Dorsolateral prefrontal cortex (tissue), 120 donors: ENCODE measurements at regions of chr1 and their contacts with region 1.

Region 1: DNA sequence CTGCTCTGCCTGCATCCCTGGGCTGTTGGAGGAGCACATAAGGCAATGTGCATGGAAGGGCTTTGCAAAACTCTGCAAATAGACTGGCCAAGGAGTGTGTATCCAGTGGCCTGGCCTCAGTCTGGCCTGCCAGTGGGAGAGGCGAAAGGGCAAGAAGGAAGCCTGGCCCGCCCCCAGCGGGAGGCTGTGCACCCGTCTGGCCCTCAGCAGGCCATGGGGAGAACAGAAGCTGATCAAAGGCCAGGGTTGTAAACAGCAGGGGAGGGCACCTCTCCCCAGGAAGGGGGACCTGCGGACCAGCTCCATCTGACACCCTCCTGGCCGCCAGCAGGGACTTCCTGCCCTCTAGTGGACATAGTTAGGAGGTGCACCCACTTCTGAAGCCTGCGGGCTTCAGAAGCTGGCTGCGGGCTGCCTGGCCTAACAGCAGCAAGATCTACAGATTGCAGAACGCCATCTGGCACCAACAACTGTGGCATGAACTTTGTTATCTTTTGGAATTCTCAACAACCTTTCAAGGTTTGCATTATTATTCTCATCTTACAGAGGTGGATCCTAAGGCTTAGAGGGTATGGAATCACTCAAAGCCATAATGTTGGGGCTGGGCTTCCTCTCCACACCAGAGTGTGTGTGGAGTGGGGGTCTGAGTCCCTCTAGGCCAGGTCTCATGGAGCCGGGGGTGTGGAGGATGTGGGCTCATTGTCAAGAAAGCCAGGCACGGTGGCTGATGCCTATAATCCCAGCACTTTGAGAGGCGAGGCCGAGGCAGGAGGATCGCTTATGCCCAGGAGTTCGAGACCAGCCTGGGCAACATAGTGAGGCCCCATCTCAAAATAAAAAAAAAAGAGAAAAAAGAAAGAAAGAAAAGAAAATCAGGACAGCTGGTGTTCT is 18.9 kb upstream of the CDK18 start:
- DNase-seq: peak in 9 of 10 donors; percentile 59 to 82 (median 69)
- H3K4me3 ChIP-seq: no peak overlapping the region
- H3K27ac ChIP-seq: peak overlapping the region in 1 of 59 donors; percentile 33
- H3K27me3 ChIP-seq: peaks cover 0 to 9% (median 0%) of the 10 kb centered on the region in 45 donors
- CTCF ChIP-seq: peak in 55 of 56 donors; percentile 79 to 99 (median 97)

Region 2: GRCh38 chr1:205273551-205273982 is 212.0 kb before region 1 on chr1:
- intact Hi-C with region 1: loop called in 1 of 2 experiments (anchors 5 kb)
- DNase-seq: peak; percentile 87 to 94 (median 90)
- H3K4me3 ChIP-seq: no peak overlapping the region
- H3K27ac ChIP-seq: peak overlapping the region; percentile 10 to 100 (median 92)
- H3K27me3 ChIP-seq: no peaks in the 10 kb centered on the region
- CTCF ChIP-seq: peak; percentile 94 to 100 (median 99)

Region 3: DNA sequence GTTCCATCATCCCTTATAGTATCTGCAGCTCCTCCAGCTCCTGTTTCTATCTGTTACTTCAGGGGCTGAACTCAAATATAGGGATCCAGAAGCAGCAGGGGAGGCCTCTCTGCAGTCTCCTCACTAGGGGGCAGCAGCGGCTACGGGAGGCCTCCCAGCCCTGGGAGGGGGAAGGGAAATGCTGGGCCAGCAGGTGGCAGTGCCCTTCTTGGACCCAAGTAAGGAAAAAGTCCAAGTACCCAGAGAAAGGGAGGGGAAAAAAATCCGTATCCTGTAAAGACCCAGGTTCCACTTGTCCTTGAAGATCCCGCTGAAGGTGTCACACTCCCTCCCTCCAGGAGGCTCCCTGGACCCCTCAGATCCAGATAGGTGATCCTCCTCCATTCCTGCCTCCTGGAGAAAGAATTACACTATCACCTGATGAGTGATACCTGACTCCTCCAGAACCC is 149.9 kb before region 1 on chr1:
- intact Hi-C with region 1: loop called (anchors 2 to 5 kb)
- DNase-seq: peak; percentile 69 to 86 (median 78)
- H3K4me3 ChIP-seq: no peak overlapping the region
- H3K27ac ChIP-seq: no peak overlapping the region
- H3K27me3 ChIP-seq: no peaks in the 10 kb centered on the region
- CTCF ChIP-seq: peak; percentile 62 to 99 (median 96)

Region 4: DNA sequence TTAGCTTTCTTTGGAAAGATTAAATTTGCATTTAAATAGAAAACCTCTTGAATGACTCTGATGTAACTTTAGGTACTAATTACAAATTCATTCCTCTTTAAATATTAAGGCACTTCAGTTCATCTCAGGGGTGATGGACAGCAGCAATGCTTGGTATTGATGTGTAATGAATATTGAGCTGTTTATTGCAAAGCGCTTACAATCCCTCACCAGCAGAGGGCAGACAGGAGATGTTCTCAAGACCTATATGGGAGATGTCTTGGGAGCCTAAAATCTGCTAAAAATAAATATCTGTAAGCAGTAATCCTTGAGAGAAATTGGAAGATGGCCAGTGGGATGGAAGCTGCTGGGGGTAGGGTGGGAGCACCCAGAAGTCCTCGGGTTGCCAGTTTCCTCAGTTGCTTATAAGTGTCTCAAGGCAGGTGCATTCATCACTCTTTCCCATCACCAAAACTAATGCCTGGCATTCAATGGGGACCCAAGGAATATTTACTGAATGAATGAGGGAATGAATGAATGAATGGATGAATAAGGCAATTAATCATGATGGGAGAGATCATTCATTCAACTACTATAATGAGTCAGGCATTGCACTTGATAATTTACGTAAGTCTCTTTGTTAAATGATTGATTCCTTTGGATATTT is 131.2 kb before region 1 on chr1:
- intact Hi-C with region 1: loop called (anchors 1 to 5 kb)
- DNase-seq: peak in 5 of 10 donors; percentile 52 to 83 (median 66)
- H3K4me3 ChIP-seq: no peak overlapping the region
- H3K27ac ChIP-seq: peak overlapping the region in 3 of 59 donors; percentile 22 to 40 (median 36)
- H3K27me3 ChIP-seq: no peaks in the 10 kb centered on the region
- CTCF ChIP-seq: peak; percentile 72 to 95 (median 86)

Region 5: GRCh38 chr1:205396967-205397616 is 88.5 kb before region 1 on chr1:
- intact Hi-C with region 1: loop called (anchors 2 to 10 kb)
- DNase-seq: peak in 2 of 10 donors; percentile 40 to 71
- H3K4me3 ChIP-seq: no peak overlapping the region
- H3K27ac ChIP-seq: no peak overlapping the region
- H3K27me3 ChIP-seq: no peaks in the 10 kb centered on the region
- CTCF ChIP-seq: peak; percentile 51 to 81 (median 73)

Region 6: GRCh38 chr1:205430696-205431305 is 54.8 kb before region 1 on chr1:
- intact Hi-C with region 1: loop called in 1 of 2 experiments (anchors 10 kb)
- DNase-seq: peak in 8 of 10 donors; percentile 58 to 79 (median 70)
- H3K4me3 ChIP-seq: peak overlapping the region; percentile 36 to 73 (median 59)
- H3K27ac ChIP-seq: peak overlapping the region in 33 of 59 donors; percentile 4 to 81 (median 46)
- H3K27me3 ChIP-seq: no peaks in the 10 kb centered on the region
- CTCF ChIP-seq: peak; percentile 43 to 94 (median 84)

Region 7: GRCh38 chr1:205449750-205450443 is 35.7 kb before region 1 on chr1:
- intact Hi-C with region 1: no loop called
- DNase-seq: no peak
- H3K4me3 ChIP-seq: no peak overlapping the region
- H3K27ac ChIP-seq: peak overlapping the region in 1 of 59 donors; percentile 71
- H3K27me3 ChIP-seq: peaks cover 0 to 42% (median 21%) of the 10 kb centered on the region in 45 donors
- CTCF ChIP-seq: no peak

Region 8: DNA sequence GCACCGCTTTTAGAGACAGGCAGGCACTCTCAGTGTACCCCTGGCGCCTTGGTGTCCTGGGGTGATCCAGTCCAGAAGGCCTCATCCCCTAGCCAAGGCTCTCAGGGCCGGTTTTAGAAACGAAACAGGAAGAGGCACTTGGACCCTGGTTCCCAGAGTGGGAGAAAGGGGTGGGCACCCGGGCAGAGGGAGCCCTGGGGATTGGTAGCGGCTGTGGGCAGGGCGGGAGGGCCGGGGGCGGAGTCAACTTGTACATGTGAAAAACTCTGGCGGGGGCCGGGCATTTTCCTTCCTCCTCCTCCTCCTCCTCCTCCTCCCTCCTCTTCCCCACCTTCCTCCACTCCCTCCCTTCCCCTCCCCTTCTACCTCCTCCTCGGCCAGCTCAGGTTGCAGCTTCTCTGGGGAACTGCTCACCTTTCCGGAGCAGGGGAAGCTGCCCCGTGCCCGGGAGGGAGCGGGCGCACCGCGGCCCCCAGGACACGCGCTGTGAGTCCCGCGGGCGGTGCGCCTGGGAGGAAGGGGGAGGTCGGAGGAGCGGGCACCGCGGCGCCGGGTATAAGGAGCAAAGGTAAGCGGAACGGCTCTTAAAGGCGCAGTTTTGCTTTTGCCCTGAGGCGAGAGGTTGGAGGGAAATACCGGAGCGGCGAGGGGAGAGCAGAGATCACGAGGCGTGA is 18.9 kb after region 1 on chr1 and contains the start of gene CDK18:
- intact Hi-C with region 1: no loop called
- DNase-seq: peak; percentile 63 to 95 (median 92)
- H3K4me3 ChIP-seq: peak within 1 kb of the TSS; percentile 61 to 92 (median 83)
- H3K27ac ChIP-seq: peak within 1 kb of the TSS; percentile 71 to 100 (median 95)
- H3K27me3 ChIP-seq: no peaks in the 10 kb centered on the region
- CTCF ChIP-seq: no peak
- total RNA-seq, gene CDK18: 55.9 to 606 (median 176) TPM

Region 9: GRCh38 chr1:205523891-205524793 is 38.6 kb after region 1 on chr1:
- intact Hi-C with region 1: loop called in 1 of 2 experiments (anchors 1 kb)
- DNase-seq: peak; percentile 83 to 94 (median 90)
- H3K4me3 ChIP-seq: no peak overlapping the region
- H3K27ac ChIP-seq: peak overlapping the region in 58 of 59 donors; percentile 8 to 100 (median 95)
- H3K27me3 ChIP-seq: no peaks in the 10 kb centered on the region
- CTCF ChIP-seq: peak; percentile 73 to 98 (median 91)

Region 10: GRCh38 chr1:205658943-205659581 is 173.5 kb after region 1 on chr1:
- intact Hi-C with region 1: no loop called
- DNase-seq: peak; percentile 84 to 91 (median 87)
- H3K4me3 ChIP-seq: peak overlapping the region in 6 of 59 donors; percentile 0 to 25 (median 17)
- H3K27ac ChIP-seq: peak overlapping the region in 54 of 59 donors; percentile 5 to 100 (median 67)
- H3K27me3 ChIP-seq: no peaks in the 10 kb centered on the region
- CTCF ChIP-seq: peak; percentile 56 to 99 (median 95)